Panc1 (cell line): ENCODE measurements at regions of chr9 and their contacts with region 1.

Region 1: DNA sequence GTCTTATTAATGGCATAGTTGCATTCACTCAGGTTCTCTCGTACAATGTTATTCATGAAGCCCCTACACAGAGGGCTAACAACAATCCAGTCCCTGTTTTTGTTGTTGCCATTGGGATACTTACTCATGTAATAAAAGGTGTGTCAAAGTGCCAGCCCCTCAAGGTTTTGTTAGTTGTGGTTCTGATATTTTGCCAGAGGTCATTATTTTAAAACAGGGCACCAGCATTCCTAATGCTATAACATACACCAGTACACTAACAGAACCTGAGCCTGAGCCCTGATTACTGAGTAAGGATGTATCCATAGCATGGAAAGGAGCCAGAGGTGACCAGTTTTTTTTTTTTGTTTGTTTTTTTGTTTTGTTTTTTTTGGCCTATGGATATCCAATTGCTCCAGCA is 50.2 kb downstream of the SMC2 start:
- DNase-seq: no peak
- ATAC-seq: no peak
- H3K4me3 ChIP-seq: no peak overlapping the region
- H3K27ac ChIP-seq: no peak overlapping the region
- H3K4me1 ChIP-seq: no peaks in the 10 kb centered on the region
- H3K27me3 ChIP-seq: no peaks in the 10 kb centered on the region
- CTCF ChIP-seq: no peak

Region 2: GRCh38 chr9:104412238-104412637 is 267.9 kb after region 1 on chr9:
- CTCF ChIA-PET with region 1: interaction called, 11 read pairs
- POLR2A ChIA-PET with region 1: no interaction called
- in situ Hi-C with region 1: no loop called
- intact Hi-C with region 1: no loop called
- DNase-seq: no peak
- ATAC-seq: no peak
- H3K4me3 ChIP-seq: no peak overlapping the region
- H3K27ac ChIP-seq: no peak overlapping the region
- H3K4me1 ChIP-seq: no peaks in the 10 kb centered on the region
- H3K27me3 ChIP-seq: no peaks in the 10 kb centered on the region
- CTCF ChIP-seq: no peak

Region 3: DNA sequence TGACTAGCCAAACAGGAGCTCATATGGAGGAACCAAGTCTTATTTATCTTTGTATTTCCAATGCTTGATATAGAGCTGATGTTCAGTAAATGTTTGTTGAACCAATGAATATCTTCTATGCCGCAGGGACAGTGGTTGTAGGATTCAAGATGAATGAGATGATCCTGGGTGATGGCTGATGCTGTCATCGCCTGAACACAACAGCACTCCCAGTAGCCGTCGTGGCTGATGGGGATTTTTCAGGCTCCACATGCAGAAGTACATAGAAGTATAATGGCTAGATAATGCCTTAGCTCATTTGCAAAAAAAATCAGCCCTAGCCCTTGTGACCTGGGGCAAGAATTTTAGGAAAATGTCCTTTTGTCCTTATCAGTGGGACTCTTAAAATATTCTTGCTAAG is 290.7 kb after region 1 on chr9:
- CTCF ChIA-PET with region 1: no interaction called
- POLR2A ChIA-PET with region 1: no interaction called
- in situ Hi-C with region 1: no loop called
- intact Hi-C with region 1: no loop called
- DNase-seq: no peak
- ATAC-seq: no peak
- H3K4me3 ChIP-seq: no peak overlapping the region
- H3K27ac ChIP-seq: no peak overlapping the region
- H3K4me1 ChIP-seq: no peaks in the 10 kb centered on the region
- H3K27me3 ChIP-seq: no peaks in the 10 kb centered on the region
- CTCF ChIP-seq: no peak